ENCODE measurements at regions of chr9 and their contacts with region 1.

Region 1: GRCh38 chr9:19493174-19493811 is 84.5 kb downstream of the ACER2 start:
- DNase-seq: peak; percentile 68
- H3K4me3 Mint-ChIP-seq: peak overlapping the region; percentile 16
- H3K27ac Mint-ChIP-seq: peak overlapping the region; percentile 33
- H3K4me1 Mint-ChIP-seq: peaks cover 20% of the 10 kb centered on the region
- H3K27me3 Mint-ChIP-seq: peaks cover 5% of the 10 kb centered on the region

Region 2: DNA sequence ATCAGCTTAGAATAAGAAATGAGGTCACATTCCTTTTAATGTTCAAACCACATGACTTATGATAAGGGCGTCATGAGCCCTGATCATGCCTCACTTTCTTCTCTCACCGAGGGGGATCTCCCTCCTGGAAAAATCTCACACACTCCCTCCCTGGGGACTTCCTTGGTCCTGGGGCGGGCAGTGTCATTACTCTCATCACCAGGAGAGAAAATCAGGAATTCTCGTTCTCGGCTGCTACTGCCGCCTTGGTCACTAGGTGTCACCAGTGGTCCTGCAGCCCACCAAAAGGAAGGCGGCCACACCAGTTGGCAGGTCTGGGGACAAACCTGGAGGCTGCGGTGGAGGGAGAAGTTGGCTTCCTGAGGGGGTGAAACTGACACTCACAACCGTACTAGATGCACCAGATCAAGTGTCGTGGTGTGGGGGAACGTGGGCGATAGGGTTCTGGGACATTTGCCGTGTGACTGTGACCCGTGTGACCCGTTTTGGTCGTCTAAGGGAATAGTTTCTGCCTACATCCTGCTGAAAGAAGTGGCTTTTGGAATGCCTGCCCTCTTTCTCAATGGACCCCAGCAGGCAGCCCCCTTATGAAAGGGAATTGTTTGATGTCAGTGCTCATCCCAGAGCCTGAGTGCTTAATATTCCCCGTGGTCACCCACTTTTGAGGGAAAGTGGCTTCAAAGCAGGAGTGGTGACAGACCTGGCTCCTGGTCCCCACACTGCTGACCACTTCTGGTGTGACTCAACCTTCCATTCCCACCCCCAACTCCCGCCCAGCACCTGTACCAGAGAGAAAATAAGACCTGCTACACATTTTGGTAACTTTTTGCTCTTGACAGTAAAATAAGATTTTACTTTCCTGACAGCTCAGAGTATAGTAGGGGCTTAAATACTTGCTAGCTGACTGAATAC is 21.3 kb before region 1 on chr9:
- CTCF ChIA-PET with region 1: interaction called, 15 read pairs
- intact Hi-C with region 1: loop called (anchors 1 kb)
- DNase-seq: peak; percentile 77
- H3K4me3 Mint-ChIP-seq: peak overlapping the region; percentile 9
- H3K27ac Mint-ChIP-seq: no peak overlapping the region
- H3K4me1 Mint-ChIP-seq: peaks cover 14% of the 10 kb centered on the region
- H3K27me3 Mint-ChIP-seq: peaks cover 3% of the 10 kb centered on the region

Region 3: DNA sequence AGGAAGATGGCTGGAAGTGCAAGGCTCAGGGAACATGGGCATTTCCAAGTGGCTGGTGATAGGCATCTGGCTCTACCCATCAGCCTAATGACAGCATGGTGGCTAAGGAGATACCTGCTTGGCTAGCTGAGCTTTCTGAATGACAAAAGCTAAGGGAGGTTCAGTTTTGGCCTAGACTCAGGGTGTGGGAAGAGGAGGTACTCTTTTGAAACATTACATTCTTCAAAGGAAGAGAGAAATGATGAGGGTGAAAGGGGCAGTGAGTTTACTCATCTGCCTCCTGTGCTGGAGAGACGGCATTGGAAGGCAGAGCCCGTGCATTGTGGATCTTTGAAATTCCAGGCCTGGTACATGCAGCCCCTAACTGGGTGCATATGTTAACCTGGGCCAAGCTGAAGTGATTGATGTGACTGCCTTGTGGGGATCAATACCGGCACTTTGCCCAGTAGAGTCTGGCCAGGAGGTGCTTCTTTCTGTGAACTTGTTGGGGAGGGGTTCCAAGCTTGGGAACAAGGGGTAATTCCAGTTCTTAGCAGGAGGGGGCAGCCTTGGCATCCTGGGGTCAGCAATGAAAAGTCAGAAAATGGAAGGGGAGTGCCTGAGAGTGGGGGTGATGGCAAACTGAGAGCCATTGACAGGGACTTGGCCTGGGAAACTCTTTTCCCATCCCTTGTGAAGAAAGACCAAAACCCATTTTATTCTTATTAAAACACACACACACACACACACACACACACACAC is 24.1 kb after region 1 on chr9:
- CTCF ChIA-PET with region 1: no interaction called
- intact Hi-C with region 1: loop called (anchors 1 kb)
- DNase-seq: peak; percentile 21
- H3K4me3 Mint-ChIP-seq: no peak overlapping the region
- H3K27ac Mint-ChIP-seq: peak overlapping the region; percentile 15
- H3K4me1 Mint-ChIP-seq: peaks cover 31% of the 10 kb centered on the region
- H3K27me3 Mint-ChIP-seq: peaks cover 11% of the 10 kb centered on the region

Region 4: DNA sequence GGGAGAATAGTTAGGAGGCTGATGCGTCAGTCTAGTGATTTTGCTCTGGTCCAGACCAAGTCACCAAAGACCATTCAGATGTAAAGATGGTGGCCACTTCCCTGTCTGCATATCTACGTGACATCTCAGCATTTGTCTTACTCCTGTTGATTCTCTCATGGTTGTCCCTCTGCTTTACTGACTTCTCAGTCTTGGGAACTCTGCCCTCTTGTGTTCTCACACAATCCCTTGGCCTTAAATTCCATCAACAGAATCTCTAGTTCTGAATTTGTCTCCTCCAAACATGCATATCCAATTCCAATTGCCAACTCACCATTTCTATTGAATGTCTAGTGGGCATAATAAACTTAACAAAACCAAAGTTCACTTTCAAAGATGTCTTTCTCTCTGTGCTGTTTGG is 147.8 kb after region 1 on chr9:
- CTCF ChIA-PET with region 1: no interaction called
- intact Hi-C with region 1: loop called (anchors 1 kb)
- DNase-seq: no peak
- H3K4me3 Mint-ChIP-seq: no peak overlapping the region
- H3K27ac Mint-ChIP-seq: no peak overlapping the region
- H3K4me1 Mint-ChIP-seq: no peaks in the 10 kb centered on the region
- H3K27me3 Mint-ChIP-seq: peaks cover 15% of the 10 kb centered on the region

Region 5: GRCh38 chr9:19748278-19749126 is 255.2 kb after region 1 on chr9:
- CTCF ChIA-PET with region 1: no interaction called
- intact Hi-C with region 1: loop called (anchors 10 kb)
- DNase-seq: no peak
- H3K4me3 Mint-ChIP-seq: no peak overlapping the region
- H3K27ac Mint-ChIP-seq: no peak overlapping the region
- H3K4me1 Mint-ChIP-seq: peaks cover 7% of the 10 kb centered on the region
- H3K27me3 Mint-ChIP-seq: no peaks in the 10 kb centered on the region

Measured in activated naive CD4-positive, alpha-beta T cell treated with anti-CD3 and anti-CD28 coated beads for 36 hours (primary cell).